PC-3 (cell line): ENCODE measurements at regions of chr3 and their contacts with region 1.

Region 1: DNA sequence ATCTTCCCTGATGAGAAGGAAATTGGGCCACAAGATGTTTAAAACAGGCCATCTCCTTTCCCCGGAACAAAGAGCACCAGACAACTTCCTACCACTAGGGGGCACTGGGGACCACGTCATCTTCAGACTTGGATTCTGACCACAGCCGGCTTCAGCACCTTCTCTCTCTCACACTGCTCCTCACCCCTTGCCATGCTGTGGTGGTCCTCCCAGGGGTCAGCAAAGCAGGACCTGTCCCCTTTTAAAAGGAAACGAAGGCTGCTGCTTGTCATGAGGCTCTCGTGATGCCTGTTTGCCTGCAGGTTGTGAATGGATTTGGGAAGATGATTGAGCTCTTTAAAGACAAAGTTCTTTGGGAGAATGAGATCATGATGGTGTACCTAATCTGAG is 16.2 kb downstream of the RFT1 start:
- DNase-seq: peak; percentile 90
- ATAC-seq: peak; percentile 61
- H3K4me3 ChIP-seq: no peak overlapping the region
- H3K27ac ChIP-seq: peak overlapping the region; percentile 81
- H3K4me1 ChIP-seq: peaks cover 44% of the 10 kb centered on the region
- H3K27me3 ChIP-seq: no peaks in the 10 kb centered on the region
- CTCF ChIP-seq: peak; percentile 99

Region 2: GRCh38 chr3:53160660-53161449 is 46.8 kb after region 1 on chr3 and contains the start of gene PRKCD:
- CTCF ChIA-PET with region 1: interaction called, 4 read pairs
- POLR2A ChIA-PET with region 1: no interaction called
- intact Hi-C with region 1: loop called (anchors 1 kb)
- DNase-seq: peak; percentile 85
- ATAC-seq: peak; percentile 77
- H3K4me3 ChIP-seq: peak within 1 kb of the TSS; percentile 96
- H3K27ac ChIP-seq: peak within 1 kb of the TSS; percentile 74
- H3K4me1 ChIP-seq: peaks cover 42% of the 10 kb centered on the region
- H3K27me3 ChIP-seq: no peaks in the 10 kb centered on the region
- CTCF ChIP-seq: peak; percentile 44
- total RNA-seq, gene PRKCD: 7.8 and 18.7 TPM in 2 replicates

Region 3: DNA sequence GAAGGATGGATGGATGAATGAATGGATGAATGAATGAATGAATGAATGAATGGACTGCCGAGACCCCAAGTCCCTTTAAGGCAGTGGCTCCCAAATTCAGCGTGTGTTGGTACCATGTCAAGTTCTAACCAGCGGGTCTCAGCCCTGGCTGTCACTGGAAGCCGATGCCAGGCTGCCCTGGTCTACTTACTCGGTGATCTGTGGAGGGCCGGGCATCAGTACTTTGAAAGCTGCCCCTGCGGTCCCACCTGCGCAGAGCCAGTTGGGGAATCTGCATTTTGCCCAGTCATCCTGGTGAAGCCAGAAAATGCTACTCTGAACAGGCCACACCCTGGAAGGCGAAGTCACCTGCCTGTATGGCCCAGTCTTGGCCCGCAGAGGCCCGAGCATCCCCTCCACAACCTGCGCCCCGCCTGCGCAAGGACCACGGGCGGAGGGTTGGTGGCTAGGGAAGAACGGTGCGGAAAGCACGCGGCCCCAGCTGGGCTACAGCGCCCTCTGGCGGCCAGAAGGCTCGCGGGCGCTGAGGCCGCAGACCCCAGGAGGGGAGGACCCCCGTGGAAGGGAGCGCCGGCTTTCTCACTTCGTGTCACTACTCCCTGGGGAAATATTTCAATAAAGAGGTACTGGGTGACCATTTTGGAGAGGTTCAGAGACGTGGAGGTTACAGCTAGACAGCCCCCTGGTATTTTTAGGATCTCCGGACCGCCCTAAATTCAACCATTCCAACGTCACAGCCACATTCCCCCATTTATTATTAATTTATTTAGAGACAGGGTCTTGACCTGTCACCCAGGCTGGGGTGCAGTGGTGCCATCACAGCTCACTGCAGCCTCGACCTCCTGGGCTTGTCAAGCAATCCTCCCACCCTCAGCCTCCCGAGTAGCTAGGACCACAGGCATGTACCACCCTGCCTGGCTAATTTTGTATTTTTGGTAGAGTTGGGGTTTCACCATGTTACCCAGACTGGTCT is 81.9 kb after region 1 on chr3:
- CTCF ChIA-PET with region 1: interaction called, 9 read pairs
- POLR2A ChIA-PET with region 1: no interaction called
- intact Hi-C with region 1: loop called (anchors 1 kb)
- DNase-seq: peak; percentile 65
- ATAC-seq: peak; percentile 52
- H3K4me3 ChIP-seq: no peak overlapping the region
- H3K27ac ChIP-seq: no peak overlapping the region
- H3K4me1 ChIP-seq: peaks cover 29% of the 10 kb centered on the region
- H3K27me3 ChIP-seq: no peaks in the 10 kb centered on the region
- CTCF ChIP-seq: peak; percentile 99